HEK293T (cell line): ENCODE measurements at regions of chr12 and their contacts with region 1.

Region 1: GRCh38 chr12:6195665-6196535 is 4.3 kb upstream of the CD9 start:
- DNase-seq: peak; percentile 91

Region 2: DNA sequence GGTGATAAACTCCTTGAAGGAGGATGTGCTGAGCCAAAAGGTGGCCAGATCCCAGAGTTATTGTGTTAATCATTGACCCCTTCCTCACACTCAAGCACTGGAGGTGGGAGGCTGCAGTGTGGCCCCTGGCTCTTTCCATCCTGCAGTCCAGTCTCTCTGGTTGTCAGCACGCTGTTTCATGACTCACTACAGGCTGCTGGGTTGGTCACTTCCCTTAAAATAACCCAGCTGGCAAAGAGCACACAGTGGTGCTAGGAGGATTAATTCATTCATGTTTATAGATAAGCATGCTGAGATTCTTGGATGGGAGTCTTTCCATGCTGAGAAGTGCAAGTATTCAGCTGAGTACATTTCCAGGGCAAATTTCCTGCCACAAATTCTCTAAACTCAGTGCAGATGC is 479.7 kb before region 1 on chr12:
- CTCF ChIA-PET with region 1: no interaction called
- POLR2A ChIA-PET with region 1: no interaction called
- DNase-seq: no peak

Region 3: DNA sequence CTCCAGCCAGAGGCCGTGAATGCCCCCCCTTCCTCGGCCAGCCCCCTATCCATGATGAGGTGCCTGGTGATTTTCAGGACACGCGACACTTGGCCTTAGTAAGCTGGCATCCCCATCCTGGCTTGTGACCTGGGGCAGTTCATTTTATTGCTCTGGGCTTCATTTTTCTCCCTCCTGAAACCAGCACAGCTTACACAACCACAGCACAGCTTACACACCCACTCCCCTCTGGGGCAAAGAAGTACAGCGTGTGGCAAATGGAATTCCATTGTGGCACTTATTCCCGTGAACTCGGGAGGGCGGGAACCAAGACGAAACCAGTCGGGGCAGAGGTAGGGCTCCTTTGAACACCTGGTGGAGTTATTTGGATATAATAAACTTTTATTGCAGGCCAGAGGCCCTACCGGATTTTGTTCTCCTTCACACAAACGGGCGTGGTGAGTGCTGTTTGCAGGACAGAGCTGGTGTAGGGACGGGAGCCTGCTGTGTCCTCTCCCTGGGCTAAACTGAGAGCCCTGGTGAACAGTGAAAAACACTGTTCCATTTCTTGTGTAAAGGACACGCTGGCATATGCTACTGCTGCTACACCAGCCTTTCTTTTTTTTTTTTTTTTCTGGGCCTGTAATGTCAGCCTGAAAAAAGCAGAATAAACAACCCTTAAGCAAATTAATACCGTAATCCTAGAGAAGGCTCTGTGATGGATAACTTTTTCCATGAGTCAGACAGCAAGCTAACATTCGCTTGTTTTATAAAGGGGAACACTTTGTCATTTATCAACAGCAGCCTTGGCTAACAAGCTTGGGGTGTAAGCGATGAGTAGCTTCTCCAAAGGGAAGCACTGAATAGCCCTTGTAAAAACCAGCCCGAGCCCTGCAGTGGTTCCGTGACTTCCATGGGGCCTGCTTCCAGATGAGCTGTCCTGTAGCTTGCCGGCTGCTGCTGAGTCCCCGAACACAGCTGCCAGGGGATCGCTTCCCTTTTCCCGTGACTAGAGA is 33.6 kb after region 1 on chr12:
- CTCF ChIA-PET with region 1: interaction called, 11 read pairs
- POLR2A ChIA-PET with region 1: interaction called, 3 read pairs
- DNase-seq: no peak

Region 4: DNA sequence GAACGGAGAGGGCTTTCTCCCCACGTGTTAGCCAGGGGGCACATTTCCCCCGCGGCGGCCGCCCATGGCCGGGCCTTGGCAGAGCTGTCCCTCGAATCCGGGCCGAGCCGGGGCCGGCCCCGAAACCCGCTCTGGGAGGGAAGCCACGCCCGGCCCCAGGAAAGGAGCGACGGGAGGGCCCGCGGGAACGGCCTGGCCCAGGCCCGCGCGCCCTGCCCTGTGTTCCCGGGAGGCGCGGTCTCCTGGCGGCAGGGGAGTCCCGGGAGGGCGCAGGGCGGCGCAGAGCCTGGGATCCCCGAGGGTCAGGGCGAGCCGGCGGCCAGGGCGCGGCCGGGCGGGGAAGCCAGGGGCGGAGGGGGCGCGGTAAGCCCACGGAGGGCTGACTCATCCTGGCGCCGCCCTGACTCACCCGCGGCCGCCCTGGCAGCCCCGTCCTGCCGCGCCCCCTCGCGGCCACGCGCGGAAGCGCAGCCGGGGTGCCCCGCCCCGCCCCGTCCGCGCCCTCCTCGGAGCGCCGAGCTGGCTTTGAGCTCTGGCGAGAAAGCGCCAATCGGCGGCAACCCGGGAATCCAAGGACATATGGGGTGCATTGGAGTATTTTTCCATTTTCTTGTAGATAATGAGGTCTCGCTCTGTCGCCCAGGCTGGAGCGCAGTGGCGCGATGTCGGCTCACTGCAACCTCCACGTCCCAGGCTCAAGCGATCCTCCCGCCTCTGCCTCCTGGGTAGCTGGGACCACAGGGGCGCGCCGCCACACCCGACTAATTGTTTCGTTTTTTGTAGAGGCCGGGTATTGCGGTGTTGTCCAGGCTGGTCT is 82.7 kb after region 1 on chr12:
- CTCF ChIA-PET with region 1: interaction called, 90 read pairs
- POLR2A ChIA-PET with region 1: interaction called, 10 read pairs
- DNase-seq: peak; percentile 91

Region 5: GRCh38 chr12:6285063-6285477 is 89.2 kb after region 1 on chr12:
- CTCF ChIA-PET with region 1: interaction called, 90 read pairs
- POLR2A ChIA-PET with region 1: interaction called, 6 read pairs
- DNase-seq: peak; percentile 86